ENCODE measurements at regions of chr1 and their contacts with region 1.

Region 1: GRCh38 chr1:42017259-42017658 is 98.5 kb upstream of the HIVEP3 start:
- DNase-seq: peak; percentile 61
- ATAC-seq: peak; percentile 96
- H3K4me3 ChIP-seq: no peak overlapping the region
- H3K27ac ChIP-seq: no peak overlapping the region; the same call in 1 of the 2 replicates
- H3K4me1 ChIP-seq: peaks cover 11% of the 10 kb centered on the region
- H3K27me3 ChIP-seq: no peaks in the 10 kb centered on the region
- CTCF ChIP-seq: no peak
- EP300 ChIP-seq: peak; percentile 23 to 83; a peak in 1 of 4 replicates
- POLR2A ChIP-seq: no peak
- RAD21 ChIP-seq: no peak

Region 2: GRCh38 chr1:41842993-41843755 is 174.1 kb before region 1 on chr1:
- CTCF ChIA-PET with region 1: no interaction called
- POLR2A ChIA-PET with region 1: no interaction called
- RAD21 ChIA-PET with region 1: no interaction called
- SMC1A ChIA-PET with region 1: no interaction called
- in situ Hi-C with region 1: no loop called
- intact Hi-C with region 1: no loop called
- DNase-seq: no peak
- ATAC-seq: no peak
- H3K4me3 ChIP-seq: no peak overlapping the region
- H3K27ac ChIP-seq: no peak overlapping the region
- H3K4me1 ChIP-seq: no peaks in the 10 kb centered on the region
- H3K27me3 ChIP-seq: no peaks in the 10 kb centered on the region
- CTCF ChIP-seq: no peak; a peak in 1 of 6 replicates
- EP300 ChIP-seq: no peak
- POLR2A ChIP-seq: no peak
- RAD21 ChIP-seq: no peak

Region 3: DNA sequence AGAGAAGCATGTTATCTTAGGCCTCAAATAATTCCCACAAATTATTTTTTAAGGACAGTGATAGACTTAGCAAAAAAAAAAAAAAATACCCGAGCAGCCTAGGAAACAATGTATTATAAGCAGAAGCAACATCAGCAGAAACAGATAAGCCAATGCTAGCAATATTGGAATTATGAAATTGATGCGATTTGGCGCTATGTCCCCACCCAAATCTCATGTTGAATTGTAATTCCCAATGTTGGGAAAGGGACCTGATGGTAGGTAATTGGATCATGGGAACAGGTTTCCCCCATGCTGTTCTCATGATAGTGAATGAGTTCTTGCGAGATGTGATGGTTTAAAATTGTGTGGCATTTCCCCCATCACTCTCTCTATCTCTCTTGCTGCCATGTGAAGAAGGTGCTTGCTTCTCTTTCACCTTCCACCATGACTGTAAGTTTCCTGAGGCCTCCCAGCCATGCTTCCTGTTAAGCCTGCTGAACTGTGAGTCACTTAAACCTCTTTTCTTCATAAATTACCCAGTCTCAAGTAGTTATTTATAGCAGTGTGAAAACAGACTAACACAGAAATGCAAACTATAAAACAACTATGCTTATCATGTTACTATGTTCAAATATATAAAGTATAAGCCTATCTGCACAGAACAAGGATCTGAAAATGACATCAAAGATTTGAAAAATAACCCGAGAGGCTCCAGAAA is 22.9 kb before region 1 on chr1:
- CTCF ChIA-PET with region 1: no interaction called
- POLR2A ChIA-PET with region 1: no interaction called
- RAD21 ChIA-PET with region 1: no interaction called
- SMC1A ChIA-PET with region 1: no interaction called
- in situ Hi-C with region 1: no loop called
- intact Hi-C with region 1: no loop called
- DNase-seq: no peak
- ATAC-seq: peak; percentile 20; the same call in 1 of the 3 replicates
- H3K4me3 ChIP-seq: no peak overlapping the region
- H3K27ac ChIP-seq: no peak overlapping the region
- H3K4me1 ChIP-seq: no peaks in the 10 kb centered on the region
- H3K27me3 ChIP-seq: no peaks in the 10 kb centered on the region
- CTCF ChIP-seq: no peak
- EP300 ChIP-seq: no peak
- POLR2A ChIP-seq: no peak
- RAD21 ChIP-seq: no peak

Region 4: DNA sequence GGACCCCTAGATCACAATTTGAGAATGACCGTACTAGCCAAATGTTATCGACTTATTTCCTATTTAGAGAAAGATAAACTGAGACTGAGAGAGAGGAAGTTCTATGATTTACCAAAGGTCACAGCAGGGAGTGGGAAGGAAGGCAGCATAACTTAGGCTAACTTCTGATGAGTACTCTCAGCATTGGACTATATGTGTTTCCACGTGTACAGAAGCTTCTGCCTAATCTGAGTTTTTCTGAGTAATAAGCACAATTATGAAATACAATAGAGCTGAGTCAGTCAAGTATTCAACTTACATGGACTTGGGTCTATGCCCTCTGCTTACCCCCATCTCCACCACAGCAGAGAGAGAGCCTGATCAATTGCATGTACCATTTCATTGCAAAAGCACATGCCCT is 10.4 kb before region 1 on chr1:
- CTCF ChIA-PET with region 1: interaction called, 4 read pairs
- POLR2A ChIA-PET with region 1: interaction called, 5 read pairs
- RAD21 ChIA-PET with region 1: interaction called, 9 read pairs
- SMC1A ChIA-PET with region 1: interaction called, 12 read pairs
- in situ Hi-C with region 1: no loop called
- intact Hi-C with region 1: no loop called
- DNase-seq: no peak
- ATAC-seq: peak; percentile 47
- H3K4me3 ChIP-seq: no peak overlapping the region
- H3K27ac ChIP-seq: peak overlapping the region; percentile 79
- H3K4me1 ChIP-seq: peaks cover 34% of the 10 kb centered on the region
- H3K27me3 ChIP-seq: no peaks in the 10 kb centered on the region
- CTCF ChIP-seq: no peak
- EP300 ChIP-seq: no peak
- POLR2A ChIP-seq: no peak
- RAD21 ChIP-seq: 0 out of 2 replicates have a peak, but pooled peaks have one; percentile 2

Region 5: DNA sequence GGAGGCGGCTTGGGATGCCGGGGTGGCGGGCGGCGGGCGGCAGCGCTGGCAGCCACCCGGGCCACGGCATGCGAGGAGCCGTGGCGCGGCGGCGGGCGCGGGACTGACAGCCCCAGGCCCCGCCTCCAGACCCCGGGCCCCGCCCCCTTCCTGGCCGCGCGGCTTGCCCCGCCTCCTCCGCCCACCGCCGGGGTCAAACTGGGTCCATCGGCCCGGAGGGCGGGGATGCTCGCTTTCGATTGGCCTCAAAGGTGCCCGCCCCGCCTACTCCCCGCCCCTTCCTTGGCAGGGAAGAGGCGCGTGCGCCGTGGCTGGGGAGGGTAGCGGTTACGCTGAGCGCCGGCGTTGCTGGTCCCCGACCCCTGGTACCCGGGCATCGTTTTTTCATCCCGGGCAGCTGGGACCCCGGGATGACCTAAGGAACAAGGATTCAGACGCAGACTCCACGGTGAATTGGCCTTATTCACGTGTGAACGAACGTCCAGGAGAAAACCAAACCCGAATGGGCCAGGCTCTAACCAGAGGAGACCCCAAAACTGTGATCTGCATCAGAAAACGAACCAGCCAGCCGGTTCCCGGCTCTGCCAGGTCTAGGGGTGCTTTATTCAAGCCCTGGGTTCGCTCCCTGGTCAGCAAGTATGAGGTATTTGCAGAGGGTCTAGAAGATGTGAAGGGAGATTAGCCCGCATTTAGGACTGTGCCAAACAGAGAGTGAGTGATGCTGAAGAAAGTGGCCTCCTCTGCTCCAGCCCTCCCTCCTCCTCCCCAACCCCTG is 18.8 kb after region 1 on chr1:
- CTCF ChIA-PET with region 1: interaction called, 17 read pairs
- POLR2A ChIA-PET with region 1: no interaction called
- RAD21 ChIA-PET with region 1: interaction called, 9 read pairs
- SMC1A ChIA-PET with region 1: interaction called, 6 read pairs
- in situ Hi-C with region 1: no loop called
- intact Hi-C with region 1: no loop called
- DNase-seq: peak; percentile 55
- ATAC-seq: peak; percentile 90
- H3K4me3 ChIP-seq: peak overlapping the region; percentile 93
- H3K27ac ChIP-seq: peak overlapping the region; percentile 37; the same call in 1 of the 2 replicates
- H3K4me1 ChIP-seq: peaks cover 8% of the 10 kb centered on the region; the same call in 1 of the 2 replicates
- H3K27me3 ChIP-seq: no peaks in the 10 kb centered on the region; a peak in 1 of 4 replicates
- CTCF ChIP-seq: no peak
- EP300 ChIP-seq: no peak
- POLR2A ChIP-seq: peak; percentile 63; the same call in 1 of the 2 replicates
- RAD21 ChIP-seq: no peak

Region 6: DNA sequence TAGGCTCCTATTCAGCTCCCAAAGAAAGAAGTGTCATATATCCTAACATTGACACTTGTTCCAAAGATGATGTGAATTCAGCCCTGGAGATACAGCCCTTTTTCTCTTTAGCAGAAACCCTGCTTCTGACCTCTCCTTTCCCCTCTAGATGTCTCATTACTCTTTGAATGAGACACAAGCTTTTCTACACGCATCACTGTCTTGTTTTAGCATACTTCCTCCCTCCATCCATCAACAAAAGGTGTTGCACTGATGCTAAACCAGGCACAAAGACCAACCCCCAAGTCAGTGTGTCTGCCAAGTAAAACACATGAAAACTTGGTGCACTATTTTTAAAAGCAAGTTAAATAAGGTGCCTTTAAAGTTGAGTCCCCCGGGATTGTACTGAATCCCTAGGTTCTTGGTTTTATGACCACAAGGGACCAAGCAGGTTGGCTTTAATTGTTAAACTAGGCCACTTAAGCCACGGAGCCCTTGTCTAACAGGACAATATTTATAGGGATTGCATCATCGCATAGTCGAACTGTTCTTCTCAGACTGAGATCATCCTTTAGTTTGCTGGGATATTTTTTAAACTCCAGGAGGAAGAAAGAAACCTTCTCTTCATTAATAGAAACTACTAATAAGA is 34.9 kb after region 1 on chr1:
- CTCF ChIA-PET with region 1: no interaction called
- POLR2A ChIA-PET with region 1: no interaction called
- RAD21 ChIA-PET with region 1: no interaction called
- SMC1A ChIA-PET with region 1: no interaction called
- in situ Hi-C with region 1: no loop called
- intact Hi-C with region 1: no loop called
- DNase-seq: no peak
- ATAC-seq: no peak
- H3K4me3 ChIP-seq: no peak overlapping the region
- H3K27ac ChIP-seq: no peak overlapping the region
- H3K4me1 ChIP-seq: no peaks in the 10 kb centered on the region
- H3K27me3 ChIP-seq: no peaks in the 10 kb centered on the region; a peak in 1 of 4 replicates
- CTCF ChIP-seq: no peak
- EP300 ChIP-seq: no peak
- POLR2A ChIP-seq: no peak
- RAD21 ChIP-seq: no peak